PC-9 (cell line): ENCODE measurements at regions of chr5 and their contacts with region 1.

Region 1: GRCh38 chr5:39283231-39283818 is 64.0 kb upstream of the FYB1 start:
- DNase-seq: peak; percentile 61 to 64
- H3K4me3 ChIP-seq: no peak overlapping the region
- H3K27ac ChIP-seq: no peak overlapping the region
- H3K4me1 ChIP-seq: no peaks in the 10 kb centered on the region
- H3K27me3 ChIP-seq: no peaks in the 10 kb centered on the region
- CTCF ChIP-seq: peak; percentile 91

Region 2: DNA sequence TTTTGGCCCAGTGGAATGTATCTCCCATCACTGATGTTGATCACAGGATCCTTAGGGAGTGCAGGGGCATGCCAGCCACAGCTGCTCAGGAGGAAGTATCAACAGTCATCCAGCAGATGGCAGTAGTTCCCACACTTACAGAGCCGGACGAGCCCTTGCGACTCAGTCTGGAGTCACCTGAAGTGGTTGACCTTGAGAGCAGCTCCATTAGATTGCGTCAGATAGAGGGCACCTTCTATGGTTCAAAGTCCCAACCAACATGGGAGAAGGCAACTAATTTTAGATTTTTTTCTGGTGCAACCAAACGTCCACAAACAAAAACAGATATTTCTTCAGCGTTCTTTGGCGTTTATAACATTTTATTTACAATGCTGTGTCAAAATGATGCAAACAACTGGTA is 900.4 kb before region 1 on chr5:
- CTCF ChIA-PET with region 1: no interaction called
- POLR2A ChIA-PET with region 1: no interaction called
- intact Hi-C with region 1: loop called (anchors 5 kb)
- DNase-seq: peak; percentile 58 to 77
- H3K4me3 ChIP-seq: no peak overlapping the region
- H3K27ac ChIP-seq: no peak overlapping the region
- H3K4me1 ChIP-seq: no peaks in the 10 kb centered on the region
- H3K27me3 ChIP-seq: peaks cover 37% of the 10 kb centered on the region
- CTCF ChIP-seq: peak; percentile 88

Region 3: DNA sequence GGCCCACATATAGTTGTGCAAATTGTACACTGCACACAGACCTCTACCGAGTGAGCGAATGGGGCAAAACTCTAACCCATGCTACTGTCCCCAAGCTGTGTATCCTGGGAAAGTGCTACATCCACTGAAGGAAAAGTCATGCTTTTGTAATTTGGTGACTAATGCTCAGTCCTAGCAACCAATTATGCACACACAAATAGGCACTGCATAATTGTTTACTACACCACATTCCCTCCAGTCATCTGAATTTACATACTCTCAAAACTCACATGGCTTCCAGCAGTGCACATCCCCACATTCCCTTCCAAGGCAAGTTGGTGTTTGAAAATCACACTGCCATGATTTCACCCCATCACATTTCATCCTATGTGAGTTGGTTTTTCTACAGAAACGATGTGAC is 563.4 kb before region 1 on chr5:
- CTCF ChIA-PET with region 1: no interaction called
- POLR2A ChIA-PET with region 1: no interaction called
- intact Hi-C with region 1: no loop called
- DNase-seq: peak in 1 of 2 experiments; percentile 42
- H3K4me3 ChIP-seq: no peak overlapping the region
- H3K27ac ChIP-seq: no peak overlapping the region
- H3K4me1 ChIP-seq: no peaks in the 10 kb centered on the region
- H3K27me3 ChIP-seq: no peaks in the 10 kb centered on the region
- CTCF ChIP-seq: no peak

Region 4: DNA sequence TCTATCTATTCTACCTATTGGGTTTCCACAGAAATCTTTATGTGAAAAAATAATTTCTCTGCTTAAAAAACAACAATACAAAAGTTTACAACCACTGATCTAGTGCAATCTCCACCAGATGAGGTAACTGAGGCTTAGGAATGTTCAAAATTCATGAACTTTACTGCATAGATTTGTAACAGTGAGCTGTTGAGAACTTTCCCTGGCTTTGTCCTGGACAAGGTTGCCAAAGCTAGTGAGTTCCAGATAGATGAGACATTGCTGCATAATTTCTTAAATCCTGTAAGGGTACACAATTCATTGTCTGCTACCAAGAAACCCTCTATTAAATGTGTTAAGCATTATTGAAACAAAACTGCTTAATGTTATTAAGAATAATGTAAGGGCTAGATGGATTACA is 334.8 kb before region 1 on chr5:
- CTCF ChIA-PET with region 1: no interaction called
- POLR2A ChIA-PET with region 1: no interaction called
- intact Hi-C with region 1: loop called (anchors 10 kb)
- DNase-seq: no peak
- H3K4me3 ChIP-seq: no peak overlapping the region
- H3K27ac ChIP-seq: no peak overlapping the region
- H3K4me1 ChIP-seq: no peaks in the 10 kb centered on the region
- H3K27me3 ChIP-seq: no peaks in the 10 kb centered on the region
- CTCF ChIP-seq: no peak

Region 5: DNA sequence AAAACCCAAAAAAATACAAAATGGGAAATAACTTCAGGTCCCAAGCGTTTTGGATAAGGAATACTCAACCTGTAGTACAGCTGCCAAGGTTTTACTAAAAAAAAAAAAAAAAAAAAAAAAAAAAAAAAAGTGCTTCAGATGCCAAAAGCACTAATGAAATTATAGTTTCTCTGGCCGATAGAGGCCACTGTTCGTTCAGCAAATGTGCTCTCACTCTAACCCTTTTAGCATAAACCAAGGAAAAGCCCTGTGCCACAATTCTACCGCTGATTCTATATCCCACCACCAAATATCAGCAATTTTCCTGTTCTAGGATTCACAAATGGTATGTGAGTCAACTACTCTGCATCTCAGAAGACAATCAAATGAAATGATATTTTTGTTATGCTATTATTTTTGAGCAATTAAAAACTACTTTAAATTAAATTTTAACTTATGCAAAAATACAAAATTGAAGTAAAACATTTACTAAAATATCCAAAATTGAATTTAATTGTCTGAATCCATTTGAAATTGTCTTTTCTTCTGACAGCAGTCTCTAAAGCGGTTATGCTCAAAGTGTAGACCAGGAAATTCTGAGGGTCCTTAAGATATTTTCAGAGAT is 288.9 kb before region 1 on chr5:
- CTCF ChIA-PET with region 1: no interaction called
- POLR2A ChIA-PET with region 1: no interaction called
- intact Hi-C with region 1: loop called (anchors 1 kb)
- DNase-seq: peak; percentile 50 to 73
- H3K4me3 ChIP-seq: no peak overlapping the region
- H3K27ac ChIP-seq: no peak overlapping the region
- H3K4me1 ChIP-seq: no peaks in the 10 kb centered on the region
- H3K27me3 ChIP-seq: no peaks in the 10 kb centered on the region
- CTCF ChIP-seq: peak; percentile 80

Region 6: DNA sequence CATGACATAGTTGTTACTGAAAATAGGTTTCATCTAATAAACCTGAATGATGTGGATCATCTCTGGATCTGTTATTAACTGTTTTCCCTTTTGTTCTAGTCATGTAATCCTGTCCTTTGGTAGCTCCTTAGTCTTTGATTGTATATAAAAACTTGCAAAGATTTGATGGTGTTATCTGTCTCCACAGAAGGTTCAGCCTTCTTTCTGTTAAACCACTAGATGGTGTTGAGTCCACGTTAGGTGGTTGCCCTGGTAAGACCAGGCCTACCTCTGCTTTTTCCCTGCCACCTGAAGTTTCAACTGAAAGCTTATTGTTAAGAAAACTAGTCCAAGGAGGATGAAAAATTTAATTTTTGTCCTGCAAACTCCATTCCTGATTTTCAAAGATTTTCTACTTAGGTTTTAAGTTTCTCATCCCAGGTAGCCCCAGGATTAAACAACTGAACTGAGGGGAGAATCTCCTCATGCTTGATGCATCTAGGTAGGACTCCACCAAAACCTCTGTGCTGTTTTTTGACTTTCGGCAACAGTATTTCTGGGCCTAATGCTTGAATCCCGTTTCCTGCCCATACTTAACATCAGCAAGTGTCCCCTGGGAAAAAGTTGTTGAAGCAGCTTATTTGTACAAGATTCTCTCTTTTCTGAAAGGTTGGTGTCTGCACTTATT is 277.6 kb before region 1 on chr5:
- CTCF ChIA-PET with region 1: no interaction called
- POLR2A ChIA-PET with region 1: no interaction called
- intact Hi-C with region 1: loop called (anchors 1 kb)
- DNase-seq: no peak
- H3K4me3 ChIP-seq: no peak overlapping the region
- H3K27ac ChIP-seq: no peak overlapping the region
- H3K4me1 ChIP-seq: no peaks in the 10 kb centered on the region
- H3K27me3 ChIP-seq: no peaks in the 10 kb centered on the region
- CTCF ChIP-seq: peak; percentile 42; the same call in 1 of the 2 replicates

Region 7: DNA sequence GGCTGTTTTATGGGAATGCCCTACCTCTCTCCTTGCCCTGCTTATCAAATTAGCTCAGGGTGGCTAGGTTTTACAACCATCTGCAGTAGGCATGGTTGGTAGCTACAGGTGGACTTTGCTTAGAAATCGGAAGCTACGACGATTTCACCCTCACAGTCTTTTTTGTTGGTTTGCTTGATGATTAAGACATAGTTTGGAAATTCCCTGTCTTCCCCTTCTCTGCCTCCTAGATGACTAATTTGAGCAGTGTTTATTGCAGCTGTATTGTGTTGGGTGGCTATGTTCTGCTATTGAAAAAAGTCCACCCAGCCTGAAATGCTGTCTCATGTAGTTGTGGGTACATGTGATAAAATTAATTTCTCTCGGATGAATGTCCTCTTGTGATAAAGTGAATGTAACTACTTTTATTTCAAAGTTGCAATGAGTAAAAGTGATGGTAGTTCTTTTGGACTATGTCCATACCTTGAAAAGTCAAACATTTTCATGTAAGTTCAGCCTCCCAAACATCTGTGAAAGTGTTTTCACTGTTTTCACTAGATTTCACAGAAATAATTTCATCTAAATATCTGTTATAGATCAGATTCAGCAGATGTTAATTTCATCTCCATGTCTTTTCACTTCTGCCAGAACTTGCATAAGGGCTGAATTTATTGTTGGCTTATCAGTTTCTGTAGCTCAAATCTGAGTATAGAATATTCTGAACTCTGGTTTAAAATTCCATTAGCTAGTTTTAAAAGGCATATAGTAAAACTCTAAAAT is 26.7 kb before region 1 on chr5:
- CTCF ChIA-PET with region 1: no interaction called
- POLR2A ChIA-PET with region 1: no interaction called
- intact Hi-C with region 1: no loop called
- DNase-seq: peak; percentile 26 to 80
- H3K4me3 ChIP-seq: peak overlapping the region; percentile 32; the same call in 1 of the 2 replicates
- H3K27ac ChIP-seq: peak overlapping the region; percentile 62
- H3K4me1 ChIP-seq: peaks cover 13% of the 10 kb centered on the region
- H3K27me3 ChIP-seq: no peaks in the 10 kb centered on the region
- CTCF ChIP-seq: no peak